Calu3 (cell line): ENCODE measurements at regions of chr18 and their contacts with region 1.

Region 1: GRCh38 chr18:37259711-37260110 is 305.9 kb downstream of the CELF4 start:
- DNase-seq: no peak
- H3K4me3 Mint-ChIP-seq: no peak overlapping the region
- H3K27ac Mint-ChIP-seq: no peak overlapping the region
- H3K4me1 Mint-ChIP-seq: no peaks in the 10 kb centered on the region
- H3K27me3 Mint-ChIP-seq: peaks cover 85% of the 10 kb centered on the region
- CTCF ChIP-seq: no peak

Region 2: GRCh38 chr18:36947821-36948348 is 311.8 kb before region 1 on chr18:
- CTCF ChIA-PET with region 1: no interaction called
- intact Hi-C with region 1: loop called (anchors 5 kb)
- DNase-seq: peak; percentile 39
- H3K4me3 Mint-ChIP-seq: peak overlapping the region; percentile 54
- H3K27ac Mint-ChIP-seq: peak overlapping the region; percentile 75
- H3K4me1 Mint-ChIP-seq: peaks cover 21% of the 10 kb centered on the region
- H3K27me3 Mint-ChIP-seq: no peaks in the 10 kb centered on the region
- CTCF ChIP-seq: no peak

Region 3: DNA sequence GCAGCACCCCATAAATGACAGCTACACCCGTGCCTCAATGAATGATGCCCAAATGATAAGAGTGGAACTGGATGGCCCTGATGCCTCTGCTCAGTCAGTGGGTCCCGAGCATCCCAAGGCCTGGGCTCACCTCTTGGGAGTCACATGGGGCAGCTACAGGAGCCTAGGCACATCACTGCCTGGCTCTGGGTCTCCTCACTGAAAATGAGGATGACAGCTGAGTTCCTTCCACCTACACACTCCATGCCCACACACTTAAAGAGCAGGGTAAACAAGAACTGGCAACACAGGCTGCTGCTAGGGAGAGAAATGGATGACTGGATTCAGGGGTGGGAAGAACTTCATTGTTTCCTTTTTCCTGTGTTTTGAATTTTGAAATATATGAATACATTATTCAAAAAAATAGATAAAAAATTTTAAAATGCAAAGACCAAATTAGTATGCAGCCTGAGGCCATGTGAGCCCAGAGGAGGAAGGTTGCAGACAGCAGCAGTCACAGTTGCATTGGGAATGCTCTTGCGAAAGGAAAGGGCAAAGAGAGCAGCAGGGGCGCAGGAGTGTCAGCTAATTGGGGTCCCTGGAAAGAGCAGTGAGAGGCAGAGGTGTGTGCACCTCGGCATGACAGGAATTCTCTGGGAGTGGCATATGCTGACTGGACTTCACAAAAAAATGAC is 21.3 kb before region 1 on chr18:
- CTCF ChIA-PET with region 1: no interaction called
- intact Hi-C with region 1: no loop called
- DNase-seq: no peak
- H3K4me3 Mint-ChIP-seq: no peak overlapping the region
- H3K27ac Mint-ChIP-seq: no peak overlapping the region
- H3K4me1 Mint-ChIP-seq: peaks cover 10% of the 10 kb centered on the region
- H3K27me3 Mint-ChIP-seq: no peaks in the 10 kb centered on the region
- CTCF ChIP-seq: no peak

Region 4: DNA sequence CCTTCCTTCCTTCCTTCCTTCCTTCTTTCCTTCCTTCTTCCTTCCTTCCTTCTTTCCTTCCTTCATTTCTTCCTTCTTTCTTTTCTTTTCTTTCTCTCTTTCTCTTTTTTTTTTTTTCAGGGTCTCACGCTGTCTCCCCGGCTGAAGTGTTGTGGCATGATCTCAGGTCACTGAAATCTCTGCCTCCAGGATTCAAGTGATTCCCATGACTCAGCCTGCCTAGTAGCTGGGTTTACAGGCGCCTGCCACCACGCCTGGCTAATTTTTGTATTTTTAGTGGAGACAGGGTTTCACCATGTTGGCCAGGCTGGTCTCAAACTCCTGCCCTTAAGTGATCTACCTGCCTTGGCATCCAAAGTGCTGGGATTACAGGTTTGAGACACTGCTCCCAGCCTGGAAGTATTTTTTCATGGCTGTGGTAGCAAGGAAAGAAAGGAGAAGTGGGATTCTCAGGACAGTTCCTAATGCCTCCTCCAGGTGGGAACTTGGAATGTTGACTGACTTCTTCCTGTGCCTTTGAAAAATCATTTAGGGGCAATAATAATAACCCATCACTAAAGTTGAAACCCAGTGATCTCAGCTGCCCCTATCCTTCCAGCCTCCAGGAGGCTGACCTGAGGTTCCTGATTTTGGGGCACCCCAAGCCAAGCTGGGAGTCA is 395.1 kb after region 1 on chr18:
- CTCF ChIA-PET with region 1: no interaction called
- intact Hi-C with region 1: no loop called
- DNase-seq: no peak
- H3K4me3 Mint-ChIP-seq: no peak overlapping the region
- H3K27ac Mint-ChIP-seq: no peak overlapping the region
- H3K4me1 Mint-ChIP-seq: no peaks in the 10 kb centered on the region
- H3K27me3 Mint-ChIP-seq: peaks cover 44% of the 10 kb centered on the region
- CTCF ChIP-seq: no peak